Caco-2 (cell line): ENCODE measurements at regions of chr6 and their contacts with region 1.

Region 1: GRCh38 chr6:152062476-152062875 is 255.0 kb downstream of the ESR1 start:
- DNase-seq: no peak
- H3K4me3 ChIP-seq: no peak overlapping the region
- H3K4me3 Mint-ChIP-seq: no peak overlapping the region
- H3K27ac Mint-ChIP-seq: no peak overlapping the region
- H3K4me1 ChIP-seq: no peaks in the 10 kb centered on the region
- H3K4me1 Mint-ChIP-seq: no peaks in the 10 kb centered on the region
- H3K27me3 ChIP-seq: no peaks in the 10 kb centered on the region
- H3K27me3 Mint-ChIP-seq: peaks cover 9% of the 10 kb centered on the region
- CTCF ChIP-seq: no peak

Region 2: GRCh38 chr6:152087701-152088100 is 25.2 kb after region 1 on chr6:
- CTCF ChIA-PET with region 1: no interaction called
- POLR2A ChIA-PET with region 1: no interaction called
- intact Hi-C with region 1: loop called (anchors 1 kb)
- DNase-seq: no peak
- H3K4me3 ChIP-seq: no peak overlapping the region
- H3K4me3 Mint-ChIP-seq: no peak overlapping the region
- H3K27ac Mint-ChIP-seq: no peak overlapping the region
- H3K4me1 ChIP-seq: no peaks in the 10 kb centered on the region
- H3K4me1 Mint-ChIP-seq: no peaks in the 10 kb centered on the region
- H3K27me3 ChIP-seq: no peaks in the 10 kb centered on the region
- H3K27me3 Mint-ChIP-seq: no peaks in the 10 kb centered on the region
- CTCF ChIP-seq: no peak